ENCODE measurements at regions of chrX and their contacts with region 1.

Region 1: DNA sequence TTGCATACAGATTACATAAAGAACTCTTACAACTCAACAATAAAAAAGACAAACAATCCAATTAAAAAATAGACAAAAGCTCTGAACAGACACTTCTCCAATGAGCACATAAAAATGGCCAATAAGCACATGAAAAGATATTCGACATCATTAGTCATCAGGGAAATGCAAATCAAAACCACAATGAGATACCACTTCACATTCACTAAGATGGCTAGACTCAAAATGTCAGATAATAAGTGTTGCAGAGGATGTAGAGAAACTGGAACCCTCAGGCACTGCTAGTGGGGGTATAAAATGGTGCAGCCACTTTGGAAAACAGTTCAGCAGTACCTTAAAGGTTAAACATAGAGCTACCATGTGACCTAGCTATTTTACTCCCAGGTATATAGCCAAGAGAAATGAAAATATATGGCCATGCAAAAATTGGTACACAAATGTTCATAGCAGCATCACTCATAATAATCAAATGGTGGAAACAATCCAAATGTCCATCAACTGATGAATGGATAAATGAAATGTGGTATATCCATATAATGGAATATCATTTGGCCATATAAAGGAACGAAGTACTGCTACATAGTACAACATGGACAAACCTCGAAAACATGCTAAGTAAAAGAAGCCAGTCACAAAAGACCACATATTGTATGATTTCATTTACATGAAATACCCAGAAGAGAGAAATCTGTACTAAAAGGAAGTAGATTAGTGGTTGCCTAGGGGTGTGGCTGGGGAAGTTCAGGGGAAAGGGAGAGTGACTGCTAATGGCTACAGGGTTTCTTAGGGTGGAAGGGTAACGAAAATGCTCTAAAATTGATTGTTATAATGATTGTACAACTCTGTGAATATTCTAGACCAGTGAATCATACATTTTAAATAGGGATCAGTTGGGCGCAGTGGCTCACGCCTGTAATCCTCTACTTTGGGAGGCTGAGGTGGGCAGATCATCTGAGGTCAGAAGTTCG is 29.4 kb downstream of the SASH3 start:
- DNase-seq: no peak
- H3K4me3 Mint-ChIP-seq: no peak overlapping the region
- H3K27ac Mint-ChIP-seq: no peak overlapping the region
- H3K4me1 Mint-ChIP-seq: peaks cover 13% of the 10 kb centered on the region
- H3K27me3 Mint-ChIP-seq: no peaks in the 10 kb centered on the region

Region 2: DNA sequence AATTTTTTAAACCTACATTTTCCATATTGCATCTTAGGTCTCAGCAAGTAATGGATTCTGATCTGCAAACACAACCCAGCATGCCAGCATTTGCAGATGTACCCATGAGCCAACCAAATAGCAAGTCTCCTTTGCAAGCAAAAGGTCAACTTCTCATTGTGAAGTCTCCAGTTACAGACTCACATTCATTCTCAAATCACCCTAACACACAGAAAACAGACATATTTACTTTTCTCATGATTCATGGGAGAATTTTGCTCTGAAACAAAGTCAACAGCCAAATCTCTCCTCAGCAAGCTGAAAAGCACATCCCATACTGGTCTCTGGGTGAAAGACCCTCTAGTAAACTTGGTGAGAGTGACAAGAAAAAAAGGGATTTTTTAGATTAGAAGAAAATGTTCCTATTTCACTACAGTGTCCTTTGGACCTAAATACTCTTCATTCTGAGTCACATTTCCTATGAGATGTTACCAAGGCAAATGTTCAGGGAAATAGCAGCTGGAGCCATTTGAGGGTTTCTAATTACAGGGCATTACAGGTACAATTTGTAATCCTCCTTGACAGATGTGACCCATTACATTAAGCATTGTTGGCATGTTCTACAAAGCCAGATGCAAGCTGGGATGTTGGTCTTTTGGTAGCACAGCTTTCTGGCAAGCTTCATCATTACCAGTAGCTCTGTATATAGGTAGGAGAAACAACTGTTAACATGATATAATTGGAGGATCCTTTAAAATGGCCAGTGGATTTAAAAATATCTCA is 669.1 kb before region 1 on chrX:
- intact Hi-C with region 1: no loop called
- DNase-seq: no peak
- H3K4me3 Mint-ChIP-seq: no peak overlapping the region
- H3K27ac Mint-ChIP-seq: no peak overlapping the region
- H3K4me1 Mint-ChIP-seq: no peaks in the 10 kb centered on the region
- H3K27me3 Mint-ChIP-seq: no peaks in the 10 kb centered on the region

Region 3: GRCh38 chrX:129833152-129833990 is 24.3 kb after region 1 on chrX:
- intact Hi-C with region 1: no loop called
- DNase-seq: no peak
- H3K4me3 Mint-ChIP-seq: no peak overlapping the region
- H3K27ac Mint-ChIP-seq: no peak overlapping the region
- H3K4me1 Mint-ChIP-seq: no peaks in the 10 kb centered on the region
- H3K27me3 Mint-ChIP-seq: no peaks in the 10 kb centered on the region

Region 4: DNA sequence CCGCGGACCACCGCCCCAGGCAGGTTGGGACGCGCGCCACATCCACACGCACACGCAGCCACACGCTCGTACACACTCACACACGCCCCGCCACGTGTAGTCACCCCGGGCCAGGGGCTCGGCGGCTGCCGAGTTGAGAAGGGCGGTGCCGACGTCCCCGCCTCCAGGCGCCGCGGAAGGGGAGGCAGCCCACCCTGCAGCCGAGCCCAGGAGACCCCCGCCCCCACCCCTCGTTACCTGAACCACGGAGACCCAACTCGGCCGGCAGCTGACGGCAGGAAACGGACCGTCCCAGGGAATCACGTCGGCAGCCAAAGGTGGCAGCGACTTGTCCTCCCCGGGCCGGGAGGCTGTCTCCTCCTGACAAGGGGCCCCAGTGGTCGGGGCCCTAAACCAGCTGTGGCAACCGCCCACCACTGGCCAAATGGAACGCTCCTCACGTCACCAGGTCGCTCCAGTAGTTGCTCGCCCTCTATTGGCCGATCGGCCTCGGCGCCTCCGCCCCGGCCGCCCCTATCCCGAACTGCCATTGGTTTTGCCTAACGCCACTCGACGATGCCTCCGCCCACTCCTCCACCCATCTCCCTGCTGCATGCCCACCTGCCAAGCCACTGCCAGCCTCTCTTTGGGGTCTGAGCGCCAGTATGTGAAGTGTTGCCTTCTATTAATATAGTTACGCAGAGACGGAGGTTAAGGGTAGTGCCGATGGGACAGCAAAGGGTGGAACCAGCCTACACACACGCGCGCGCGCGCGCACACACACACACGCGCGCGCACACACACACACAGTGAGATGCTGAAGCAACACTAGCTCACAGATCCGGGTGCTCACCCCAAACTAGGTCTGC is 34.6 kb after region 1 on chrX and contains the start of gene ZDHHC9:
- intact Hi-C with region 1: loop called (anchors 2 kb)
- DNase-seq: peak; percentile 78
- H3K4me3 Mint-ChIP-seq: peak within 1 kb of the TSS; percentile 93
- H3K27ac Mint-ChIP-seq: peak within 1 kb of the TSS; percentile 88
- H3K4me1 Mint-ChIP-seq: peaks cover 28% of the 10 kb centered on the region
- H3K27me3 Mint-ChIP-seq: peaks cover 4% of the 10 kb centered on the region
- total RNA-seq, gene ZDHHC9: 13.6 and 14.2 TPM in 2 replicates